IMR-90 (cell line): ENCODE measurements at regions of chr3 and their contacts with region 1.

Region 1: DNA sequence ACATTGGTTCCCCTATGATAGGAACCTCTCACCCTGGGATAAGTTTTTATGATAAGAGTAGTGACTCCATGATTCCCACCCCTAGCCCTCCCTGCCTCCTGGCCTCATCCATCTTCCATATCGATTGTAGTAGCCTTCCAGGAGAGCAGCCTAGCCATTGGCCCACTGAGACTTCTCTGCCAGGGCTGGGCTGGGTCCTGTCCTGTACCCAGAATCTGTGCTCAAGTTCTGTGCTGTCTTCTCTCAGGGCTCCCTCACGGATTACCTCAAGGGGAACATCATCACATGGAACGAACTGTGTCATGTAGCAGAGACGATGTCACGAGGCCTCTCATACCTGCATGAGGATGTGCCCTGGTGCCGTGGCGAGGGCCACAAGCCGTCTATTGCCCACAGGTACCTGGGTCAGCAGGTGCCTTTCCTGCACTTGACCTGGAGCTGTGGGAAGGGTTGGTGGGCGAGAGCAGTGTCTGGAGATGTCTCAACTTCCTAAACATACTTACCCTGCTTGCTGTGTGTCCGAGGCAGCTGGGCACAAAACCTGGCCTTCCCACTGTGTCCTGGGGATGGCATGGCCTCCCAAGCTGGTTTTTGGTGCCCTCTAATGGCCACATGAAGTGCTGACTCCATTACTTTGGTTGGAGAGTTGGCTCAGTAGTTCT is 16.6 kb upstream of the EXOG start:
- DNase-seq: peak; percentile 62
- ATAC-seq: peak; percentile 99
- H3K4me3 ChIP-seq: no peak overlapping the region
- H3K27ac ChIP-seq: no peak overlapping the region
- H3K4me1 ChIP-seq: no peaks in the 10 kb centered on the region
- H3K27me3 ChIP-seq: no peaks in the 10 kb centered on the region
- CTCF ChIP-seq: peak; percentile 92
- POLR2A ChIP-seq: peak; percentile 43; the same call in 1 of the 2 replicates
- RAD21 ChIP-seq: peak; percentile 95

Region 2: DNA sequence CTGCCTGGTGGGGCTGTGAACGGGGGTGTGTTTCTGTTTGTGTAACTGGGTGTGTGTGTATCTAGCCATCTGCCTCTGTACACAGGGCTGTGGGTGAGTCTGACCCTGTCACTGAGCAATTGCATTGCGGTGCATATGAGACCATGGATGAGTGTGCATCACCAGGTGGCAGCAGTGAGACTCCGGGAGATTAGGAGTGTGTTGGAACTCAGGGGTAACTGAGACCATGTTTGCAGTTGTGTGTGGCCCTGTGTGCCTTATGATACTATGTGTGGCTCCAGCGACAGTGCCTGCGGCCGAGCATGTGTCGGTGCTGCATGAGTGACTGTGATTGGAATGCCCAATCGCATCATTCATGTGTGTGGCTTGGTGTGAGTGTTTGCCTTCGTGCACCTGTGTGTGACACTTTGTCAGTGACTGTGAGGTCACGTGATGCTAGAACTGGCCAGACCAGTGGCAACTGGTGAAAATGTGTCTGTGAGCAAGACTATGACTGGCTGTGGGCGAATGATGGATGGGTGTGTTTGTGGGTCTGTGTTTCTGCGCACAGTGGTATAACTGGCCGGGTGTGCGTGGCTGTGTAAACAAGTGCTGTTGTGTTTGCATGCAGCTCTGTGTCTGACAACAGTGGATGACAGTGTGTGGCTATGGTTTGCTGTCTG is 475.0 kb before region 1 on chr3:
- CTCF ChIA-PET with region 1: no interaction called
- POLR2A ChIA-PET with region 1: no interaction called
- dilution Hi-C with region 1: no loop called
- in situ Hi-C with region 1: no loop called
- intact Hi-C with region 1: loop called (anchors 1 kb)
- DNase-seq: peak; percentile 59
- ATAC-seq: peak; percentile 88
- H3K4me3 ChIP-seq: no peak overlapping the region
- H3K27ac ChIP-seq: no peak overlapping the region
- H3K4me1 ChIP-seq: no peaks in the 10 kb centered on the region
- H3K27me3 ChIP-seq: no peaks in the 10 kb centered on the region
- CTCF ChIP-seq: peak; percentile 67
- POLR2A ChIP-seq: no peak
- RAD21 ChIP-seq: peak; percentile 57

Region 3: DNA sequence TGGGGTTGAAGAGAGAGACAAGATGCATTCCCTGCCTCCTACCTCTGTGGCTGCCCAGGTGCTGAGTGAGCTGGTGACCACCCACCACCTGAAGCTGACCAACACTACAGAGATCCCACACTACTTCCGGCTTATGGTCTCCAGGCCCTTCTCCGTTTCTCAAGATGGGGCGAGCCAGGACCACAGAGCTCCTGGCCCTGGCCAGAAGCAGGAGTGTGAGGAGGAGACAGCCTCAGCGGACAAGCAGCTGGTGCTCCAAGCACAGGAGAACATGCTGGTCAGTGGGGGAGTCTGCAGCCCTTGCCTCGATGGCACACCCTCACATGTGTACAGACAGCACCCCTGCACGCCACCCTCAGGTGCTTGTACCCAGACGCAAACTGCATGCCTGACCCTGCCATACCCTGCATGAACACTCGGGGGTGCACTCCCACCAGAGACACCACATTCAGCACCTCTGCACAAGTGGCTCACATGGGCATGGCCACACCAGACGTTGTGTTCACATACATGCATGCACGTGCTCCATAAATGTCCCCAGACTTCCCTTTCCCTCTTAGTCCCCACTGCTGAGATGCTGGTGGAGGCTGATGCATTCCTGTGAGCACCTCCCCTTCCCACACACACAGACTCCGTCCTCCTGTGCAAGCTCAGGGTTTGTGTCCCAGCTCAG is 361.7 kb before region 1 on chr3:
- CTCF ChIA-PET with region 1: no interaction called
- POLR2A ChIA-PET with region 1: no interaction called
- dilution Hi-C with region 1: no loop called
- in situ Hi-C with region 1: no loop called
- intact Hi-C with region 1: loop called (anchors 1 kb)
- DNase-seq: peak; percentile 55
- ATAC-seq: peak; percentile 81
- H3K4me3 ChIP-seq: no peak overlapping the region
- H3K27ac ChIP-seq: no peak overlapping the region
- H3K4me1 ChIP-seq: no peaks in the 10 kb centered on the region
- H3K27me3 ChIP-seq: peaks cover 8% of the 10 kb centered on the region
- CTCF ChIP-seq: peak; percentile 69
- POLR2A ChIP-seq: no peak
- RAD21 ChIP-seq: peak; percentile 84